CD14-positive monocyte (primary cell): ENCODE measurements at regions of chr5 and their contacts with region 1.

Region 1: DNA sequence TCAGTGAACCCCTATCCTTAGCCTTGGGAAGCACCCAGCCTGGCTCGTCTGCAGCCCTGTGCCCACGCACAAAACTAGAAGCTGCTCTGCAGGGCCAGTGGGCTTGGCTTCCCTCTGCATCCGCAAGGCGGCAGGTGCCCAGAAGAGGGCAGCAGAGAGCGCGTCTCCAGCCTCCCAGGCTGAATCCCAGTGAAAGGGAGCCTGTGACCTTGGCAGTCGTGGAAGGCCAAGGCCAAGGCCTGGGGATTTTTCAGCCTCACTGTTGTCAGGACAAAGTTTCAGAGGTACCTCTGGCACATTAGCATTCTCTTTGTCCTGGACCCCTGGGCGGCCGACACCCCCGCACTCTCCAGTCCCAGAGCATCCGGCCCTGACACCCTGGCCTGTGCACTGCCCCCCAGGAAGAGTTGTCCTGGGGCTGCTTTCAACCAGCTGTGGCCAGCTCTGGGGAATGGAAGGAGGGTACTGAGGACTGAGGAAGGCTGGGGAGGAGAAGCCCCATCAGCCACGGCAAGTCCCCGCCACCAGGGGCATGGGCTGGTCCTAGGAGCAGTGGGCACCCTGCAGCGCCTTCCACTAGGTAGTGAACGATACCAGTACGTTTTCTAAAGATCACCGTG is 63.6 kb upstream of the IL17B start:
- DNase-seq: peak; percentile 32 to 56 (median 54)
- H3K4me3 ChIP-seq: no peak overlapping the region
- H3K4me3 Mint-ChIP-seq: no peak overlapping the region
- H3K27ac ChIP-seq: no peak overlapping the region
- H3K27ac Mint-ChIP-seq: peak overlapping the region in 1 of 7 donors; percentile 15
- H3K4me1 ChIP-seq: no peaks in the 10 kb centered on the region
- H3K4me1 Mint-ChIP-seq: peaks cover 7% of the 10 kb centered on the region
- H3K27me3 ChIP-seq: no peaks in the 10 kb centered on the region
- H3K27me3 Mint-ChIP-seq: peaks cover 0 to 8% (median 0%) of the 10 kb centered on the region in 3 donors
- CTCF ChIP-seq: peak; percentile 94

Region 2: DNA sequence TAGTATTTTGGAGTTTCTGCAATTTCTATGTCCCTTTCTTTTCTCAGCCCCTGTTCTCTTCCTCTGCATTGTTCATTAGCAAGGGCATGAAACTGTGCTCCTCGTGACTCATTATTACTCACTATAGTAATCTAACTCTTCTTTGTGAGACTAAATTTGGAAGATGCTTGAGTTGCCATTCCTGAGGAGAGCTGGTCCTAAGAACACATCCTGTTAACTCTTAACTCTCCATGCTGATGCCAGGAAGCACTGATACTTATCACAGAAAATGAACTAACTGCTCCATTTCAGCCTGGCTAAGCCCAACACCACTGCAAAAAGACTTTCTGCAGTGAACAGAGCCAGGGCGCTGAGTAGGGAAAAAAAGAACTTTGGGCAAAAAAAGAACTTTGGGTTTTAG is 119.2 kb after region 1 on chr5:
- intact Hi-C with region 1: loop called (anchors 2 to 5 kb)
- DNase-seq: peak in 1 of 3 donors; percentile 9
- H3K4me3 ChIP-seq: no peak overlapping the region
- H3K4me3 Mint-ChIP-seq: no peak overlapping the region
- H3K27ac ChIP-seq: no peak overlapping the region
- H3K27ac Mint-ChIP-seq: no peak overlapping the region
- H3K4me1 ChIP-seq: peaks cover 7 to 14% of the 10 kb centered on the region in 2 donors
- H3K4me1 Mint-ChIP-seq: peaks cover 15% of the 10 kb centered on the region
- H3K27me3 ChIP-seq: no peaks in the 10 kb centered on the region
- H3K27me3 Mint-ChIP-seq: peaks cover 0 to 3% (median 0%) of the 10 kb centered on the region in 3 donors
- CTCF ChIP-seq: no peak